ENCODE measurements at regions of chr13 and their contacts with region 1.

Region 1: DNA sequence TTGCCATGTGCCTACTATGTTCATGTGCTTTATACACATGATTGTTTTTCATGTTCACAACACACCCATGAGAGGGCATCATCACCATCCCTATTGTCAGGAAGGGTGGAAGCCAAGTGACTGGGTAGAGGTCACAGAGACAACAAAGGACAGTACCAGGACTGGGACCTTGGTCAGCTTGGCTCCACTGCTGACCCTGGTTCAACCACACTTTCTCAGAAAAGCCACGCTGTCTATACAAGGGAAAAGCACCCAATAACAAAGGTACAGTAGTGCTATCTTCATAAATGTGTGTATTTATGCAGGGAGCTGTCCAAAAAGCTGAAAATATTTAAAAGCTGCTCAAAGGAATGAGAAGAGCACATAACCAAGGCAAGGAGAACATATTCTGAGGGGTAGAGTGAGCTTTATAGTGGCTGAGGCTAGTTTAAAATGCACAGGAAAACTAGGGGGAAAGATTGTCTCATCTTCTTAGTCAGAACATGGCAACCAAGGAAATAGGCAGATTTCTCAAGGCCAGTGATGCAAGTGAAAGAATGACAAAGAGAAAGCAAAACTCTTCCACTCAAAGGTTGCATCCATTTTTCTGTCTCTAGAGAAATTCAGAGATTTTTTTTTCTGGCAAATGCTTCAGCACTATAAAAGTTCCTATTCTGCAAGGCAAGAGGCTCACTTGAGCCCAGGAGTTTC is 415.0 kb downstream of the FOXO1 start:
- DNase-seq: peak; percentile 28
- H3K4me3 Mint-ChIP-seq: no peak overlapping the region
- H3K27ac Mint-ChIP-seq: peak overlapping the region; percentile 88
- H3K4me1 Mint-ChIP-seq: peaks cover 52% of the 10 kb centered on the region
- H3K27me3 Mint-ChIP-seq: no peaks in the 10 kb centered on the region

Region 2: GRCh38 chr13:39542361-39542760 is 709.1 kb before region 1 on chr13:
- CTCF ChIA-PET with region 1: no interaction called
- intact Hi-C with region 1: no loop called
- DNase-seq: no peak
- H3K4me3 Mint-ChIP-seq: no peak overlapping the region
- H3K27ac Mint-ChIP-seq: no peak overlapping the region
- H3K4me1 Mint-ChIP-seq: no peaks in the 10 kb centered on the region
- H3K27me3 Mint-ChIP-seq: peaks cover 19% of the 10 kb centered on the region

Region 3: GRCh38 chr13:39641645-39642044 is 609.8 kb before region 1 on chr13:
- CTCF ChIA-PET with region 1: no interaction called
- intact Hi-C with region 1: no loop called
- DNase-seq: no peak
- H3K4me3 Mint-ChIP-seq: no peak overlapping the region
- H3K27ac Mint-ChIP-seq: no peak overlapping the region
- H3K4me1 Mint-ChIP-seq: no peaks in the 10 kb centered on the region
- H3K27me3 Mint-ChIP-seq: peaks cover 14% of the 10 kb centered on the region

Region 4: GRCh38 chr13:39952249-39953233 is 298.9 kb before region 1 on chr13:
- CTCF ChIA-PET with region 1: no interaction called
- intact Hi-C with region 1: loop called (anchors 5 kb)
- DNase-seq: peak; percentile 27
- H3K4me3 Mint-ChIP-seq: no peak overlapping the region
- H3K27ac Mint-ChIP-seq: peak overlapping the region; percentile 5
- H3K4me1 Mint-ChIP-seq: peaks cover 48% of the 10 kb centered on the region
- H3K27me3 Mint-ChIP-seq: no peaks in the 10 kb centered on the region

Region 5: GRCh38 chr13:40190641-40191100 is 60.8 kb before region 1 on chr13:
- CTCF ChIA-PET with region 1: interaction called, 3 read pairs
- intact Hi-C with region 1: loop called (anchors 1 kb)
- DNase-seq: peak; percentile 91
- H3K4me3 Mint-ChIP-seq: peak overlapping the region; percentile 36
- H3K27ac Mint-ChIP-seq: peak overlapping the region; percentile 81
- H3K4me1 Mint-ChIP-seq: peaks cover 69% of the 10 kb centered on the region
- H3K27me3 Mint-ChIP-seq: no peaks in the 10 kb centered on the region

Region 6: DNA sequence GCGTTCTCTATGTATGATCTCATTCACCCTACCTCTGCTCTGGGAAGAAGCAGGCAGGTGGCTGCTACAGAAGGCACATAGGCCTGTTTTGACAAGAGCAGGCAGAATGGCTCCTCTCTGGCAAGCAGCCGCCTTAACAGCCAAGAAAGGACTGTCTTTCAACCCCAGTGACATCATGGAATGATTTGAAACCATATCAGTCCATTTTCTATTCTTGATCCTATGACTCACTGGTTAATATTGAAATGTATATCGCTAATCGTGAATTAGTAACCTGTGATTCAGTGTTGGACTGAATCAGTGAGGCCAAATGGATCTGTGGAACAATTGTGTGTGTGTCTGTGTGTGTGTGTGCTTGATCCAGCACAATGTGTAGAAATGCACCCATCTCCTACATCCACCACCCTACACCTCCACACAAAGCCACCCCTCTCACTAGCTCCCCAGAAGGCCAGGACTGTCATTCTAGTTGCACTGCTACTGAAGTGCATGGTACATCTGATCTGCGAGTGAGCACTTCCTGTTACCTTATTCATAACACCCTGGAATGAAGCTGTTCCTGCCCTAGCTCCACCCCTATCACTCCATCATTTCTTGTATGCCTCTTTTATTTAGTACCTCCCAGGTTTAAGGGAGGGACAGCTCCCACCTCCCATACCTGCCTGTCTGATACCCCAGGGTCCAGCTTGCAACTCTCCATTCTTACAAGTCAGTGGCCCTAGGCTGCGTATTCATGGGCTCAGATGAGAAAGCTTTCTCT is 45.1 kb before region 1 on chr13:
- CTCF ChIA-PET with region 1: interaction called, 3 read pairs
- intact Hi-C with region 1: loop called (anchors 1 kb)
- DNase-seq: peak; percentile 74
- H3K4me3 Mint-ChIP-seq: peak overlapping the region; percentile 64
- H3K27ac Mint-ChIP-seq: peak overlapping the region; percentile 100
- H3K4me1 Mint-ChIP-seq: peaks cover 73% of the 10 kb centered on the region
- H3K27me3 Mint-ChIP-seq: no peaks in the 10 kb centered on the region

Region 7: GRCh38 chr13:40271931-40272775 is 20.7 kb after region 1 on chr13:
- CTCF ChIA-PET with region 1: interaction called, 3 read pairs
- intact Hi-C with region 1: loop called (anchors 2 kb)
- DNase-seq: peak; percentile 75
- H3K4me3 Mint-ChIP-seq: no peak overlapping the region
- H3K27ac Mint-ChIP-seq: no peak overlapping the region
- H3K4me1 Mint-ChIP-seq: peaks cover 23% of the 10 kb centered on the region
- H3K27me3 Mint-ChIP-seq: no peaks in the 10 kb centered on the region

Region 8: GRCh38 chr13:40318366-40318765 is 66.9 kb after region 1 on chr13:
- CTCF ChIA-PET with region 1: interaction called, 3 read pairs
- intact Hi-C with region 1: loop called (anchors 1 kb)
- DNase-seq: peak; percentile 23
- H3K4me3 Mint-ChIP-seq: no peak overlapping the region
- H3K27ac Mint-ChIP-seq: no peak overlapping the region
- H3K4me1 Mint-ChIP-seq: peaks cover 64% of the 10 kb centered on the region
- H3K27me3 Mint-ChIP-seq: no peaks in the 10 kb centered on the region

Region 9: GRCh38 chr13:40371531-40372125 is 120.1 kb after region 1 on chr13:
- CTCF ChIA-PET with region 1: no interaction called
- intact Hi-C with region 1: loop called (anchors 5 kb)
- DNase-seq: no peak
- H3K4me3 Mint-ChIP-seq: no peak overlapping the region
- H3K27ac Mint-ChIP-seq: no peak overlapping the region
- H3K4me1 Mint-ChIP-seq: peaks cover 49% of the 10 kb centered on the region
- H3K27me3 Mint-ChIP-seq: no peaks in the 10 kb centered on the region